GM12878 (cell line): ENCODE measurements at regions of chr12 and their contacts with region 1.

Region 1: DNA sequence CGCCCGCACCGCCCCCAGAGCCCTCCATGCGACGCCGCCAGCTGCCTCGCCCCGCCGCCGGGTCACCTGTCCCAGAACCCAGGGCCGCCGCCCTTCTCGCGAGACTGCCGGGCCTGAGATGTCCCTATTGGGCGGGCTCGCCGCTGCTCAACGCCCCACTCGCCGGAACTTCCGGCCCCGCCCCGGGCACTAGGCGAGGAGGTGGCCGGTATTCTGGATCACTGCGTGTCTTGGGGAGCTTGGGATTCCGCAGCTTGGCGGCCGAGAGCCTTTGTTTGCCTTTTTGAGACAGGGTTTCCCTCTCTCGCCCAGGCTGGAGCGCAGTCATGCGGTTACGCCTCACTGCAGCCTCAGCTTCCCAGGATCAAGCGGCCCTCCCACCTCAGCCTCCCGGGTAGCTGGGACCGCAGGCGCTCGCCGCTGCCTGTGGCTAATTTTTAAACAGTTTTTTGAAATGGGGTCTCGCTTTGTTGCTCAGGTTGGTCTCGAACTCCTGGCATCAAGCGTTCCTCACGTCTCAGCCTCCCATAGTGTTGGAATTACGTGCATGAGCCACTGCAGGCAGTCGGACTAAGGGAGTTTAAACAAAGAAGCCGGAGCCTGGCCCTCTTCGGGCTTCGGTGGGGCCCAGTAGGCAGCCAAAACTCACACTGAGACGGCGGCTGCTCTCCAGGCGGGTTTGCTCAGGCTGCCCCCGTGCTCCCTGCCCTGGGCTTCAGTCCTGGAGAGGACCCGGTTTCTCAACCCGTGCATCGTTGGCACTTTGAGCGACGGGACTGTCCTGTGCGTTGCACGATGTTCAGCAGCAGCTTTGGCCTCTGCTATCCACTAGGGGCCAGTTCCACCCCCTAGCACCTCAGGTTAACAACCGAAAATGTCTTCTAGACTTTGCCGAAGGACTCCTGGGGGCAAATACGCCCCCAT is at the start of gene SLC15A4:
- DNase-seq: no peak
- ATAC-seq: peak; percentile 72
- H3K4me3 ChIP-seq: peak within 1 kb of the TSS; percentile 98
- H3K27ac ChIP-seq: peak within 1 kb of the TSS; percentile 94
- H3K4me1 ChIP-seq: peaks cover 25% of the 10 kb centered on the region
- H3K27me3 ChIP-seq: no peaks in the 10 kb centered on the region
- CTCF ChIP-seq: peak; percentile 27 to 55 (median 36); a peak in 4 of 6 replicates
- EP300 ChIP-seq: no peak; a peak in 1 of 4 replicates
- POLR2A ChIP-seq: peak; percentile 77
- RAD21 ChIP-seq: peak; percentile 29; the same call in 1 of the 2 replicates
- polyA plus RNA-seq, gene SLC15A4: 17.6 to 24.7 TPM

Region 2: GRCh38 chr12:128693771-128694170 is 130.4 kb before region 1 on chr12:
- CTCF ChIA-PET with region 1: no interaction called
- POLR2A ChIA-PET with region 1: no interaction called
- RAD21 ChIA-PET with region 1: no interaction called
- SMC1A ChIA-PET with region 1: no interaction called
- in situ Hi-C with region 1: no loop called
- intact Hi-C with region 1: no loop called
- DNase-seq: no peak
- ATAC-seq: no peak
- H3K4me3 ChIP-seq: no peak overlapping the region
- H3K27ac ChIP-seq: no peak overlapping the region
- H3K4me1 ChIP-seq: no peaks in the 10 kb centered on the region
- H3K27me3 ChIP-seq: no peaks in the 10 kb centered on the region; a peak in 1 of 4 replicates
- CTCF ChIP-seq: no peak
- EP300 ChIP-seq: no peak
- POLR2A ChIP-seq: no peak
- RAD21 ChIP-seq: no peak

Region 3: GRCh38 chr12:128783129-128783574 is 41.0 kb before region 1 on chr12:
- CTCF ChIA-PET with region 1: interaction called, 31 read pairs
- POLR2A ChIA-PET with region 1: interaction called, 10 read pairs
- RAD21 ChIA-PET with region 1: interaction called, 22 read pairs
- SMC1A ChIA-PET with region 1: interaction called, 17 read pairs
- in situ Hi-C with region 1: no loop called
- intact Hi-C with region 1: loop called (anchors 2 kb)
- DNase-seq: no peak
- ATAC-seq: peak; percentile 83
- H3K4me3 ChIP-seq: no peak overlapping the region; the same call in 1 of the 2 replicates
- H3K27ac ChIP-seq: peak overlapping the region; percentile 47; the same call in 1 of the 2 replicates
- H3K4me1 ChIP-seq: no peaks in the 10 kb centered on the region; the same call in none of the 2 replicates
- H3K27me3 ChIP-seq: no peaks in the 10 kb centered on the region
- CTCF ChIP-seq: no peak
- EP300 ChIP-seq: no peak
- POLR2A ChIP-seq: no peak
- RAD21 ChIP-seq: no peak

Region 4: GRCh38 chr12:128797119-128798118 is 26.8 kb before region 1 on chr12:
- CTCF ChIA-PET with region 1: interaction called, 51 read pairs
- POLR2A ChIA-PET with region 1: interaction called, 137 read pairs
- RAD21 ChIA-PET with region 1: interaction called, 125 read pairs
- SMC1A ChIA-PET with region 1: interaction called, 112 read pairs
- in situ Hi-C with region 1: no loop called
- intact Hi-C with region 1: no loop called
- DNase-seq: no peak
- ATAC-seq: peak; percentile 82
- H3K4me3 ChIP-seq: peak overlapping the region; percentile 5; the same call in 1 of the 2 replicates
- H3K27ac ChIP-seq: peak overlapping the region; percentile 99
- H3K4me1 ChIP-seq: peaks cover 60% of the 10 kb centered on the region
- H3K27me3 ChIP-seq: no peaks in the 10 kb centered on the region
- CTCF ChIP-seq: no peak; a peak in 1 of 6 replicates
- EP300 ChIP-seq: peak in 1 of 2 experiments; percentile 26; a peak in 1 of 4 replicates
- POLR2A ChIP-seq: peak; percentile 39
- RAD21 ChIP-seq: peak; percentile 29; the same call in 1 of the 2 replicates

Region 5: DNA sequence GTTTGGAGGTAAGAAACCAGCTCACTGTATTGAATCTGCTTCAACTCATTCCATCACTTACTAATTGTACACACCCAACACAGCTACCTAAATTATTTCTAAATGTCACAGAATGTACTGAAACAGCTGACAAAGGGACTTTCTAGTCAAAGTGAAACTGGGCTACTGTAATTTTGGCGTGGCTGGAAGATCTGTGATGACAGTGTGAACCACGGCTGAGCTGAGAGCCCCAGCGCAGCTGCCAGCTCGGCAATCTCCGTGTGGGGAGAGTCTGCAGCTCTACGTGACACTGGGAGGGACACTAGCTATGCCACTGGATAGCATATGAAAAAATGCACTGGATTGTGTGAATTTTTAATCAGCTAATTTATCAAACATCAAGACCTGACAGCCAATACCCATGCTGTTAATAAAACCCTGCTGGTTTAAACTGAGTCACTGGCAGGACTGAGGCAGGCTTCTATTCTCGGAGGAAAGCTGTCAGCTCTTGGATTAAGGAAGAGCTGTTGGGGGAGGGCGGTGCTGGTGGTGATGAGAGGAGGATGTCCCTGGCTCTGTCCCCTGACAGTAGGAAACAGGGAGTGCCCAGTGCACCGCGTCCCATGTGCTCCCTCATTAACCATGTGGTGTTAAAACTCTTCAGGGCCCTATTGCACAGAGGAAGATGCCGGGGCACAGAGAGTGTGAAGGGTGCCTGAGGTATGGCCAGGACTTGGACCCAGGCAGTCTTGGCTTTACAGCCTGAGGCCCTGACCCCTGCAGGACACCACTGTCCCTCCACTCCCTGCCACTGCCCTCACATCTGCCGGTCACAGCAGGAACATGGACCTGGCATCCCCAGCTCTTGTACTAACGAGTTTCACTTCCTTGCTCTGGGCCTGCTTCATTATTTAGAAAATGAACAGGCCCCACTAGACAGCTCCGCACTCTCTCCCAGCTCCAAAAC is 13.7 kb before region 1 on chr12:
- CTCF ChIA-PET with region 1: interaction called, 38 read pairs
- POLR2A ChIA-PET with region 1: interaction called, 144 read pairs
- RAD21 ChIA-PET with region 1: interaction called, 127 read pairs
- SMC1A ChIA-PET with region 1: interaction called, 101 read pairs
- in situ Hi-C with region 1: no loop called
- intact Hi-C with region 1: no loop called
- DNase-seq: peak; percentile 92
- ATAC-seq: peak; percentile 84
- H3K4me3 ChIP-seq: peak overlapping the region; percentile 55
- H3K27ac ChIP-seq: peak overlapping the region; percentile 94
- H3K4me1 ChIP-seq: peaks cover 61% of the 10 kb centered on the region
- H3K27me3 ChIP-seq: no peaks in the 10 kb centered on the region
- CTCF ChIP-seq: peak; percentile 10 to 31 (median 14); a peak in 1 of 6 replicates
- EP300 ChIP-seq: peak; percentile 64 to 93
- POLR2A ChIP-seq: peak; percentile 79
- RAD21 ChIP-seq: peak; percentile 32; the same call in 1 of the 2 replicates

Region 6: GRCh38 chr12:128857133-128857763 is 33.1 kb after region 1 on chr12:
- CTCF ChIA-PET with region 1: interaction called, 7 read pairs
- POLR2A ChIA-PET with region 1: interaction called, 15 read pairs
- RAD21 ChIA-PET with region 1: interaction called, 16 read pairs
- SMC1A ChIA-PET with region 1: interaction called, 19 read pairs
- in situ Hi-C with region 1: no loop called
- intact Hi-C with region 1: no loop called
- DNase-seq: peak; percentile 31
- ATAC-seq: peak; percentile 17
- H3K4me3 ChIP-seq: no peak overlapping the region
- H3K27ac ChIP-seq: no peak overlapping the region
- H3K4me1 ChIP-seq: peaks cover 11% of the 10 kb centered on the region; the same call in 1 of the 2 replicates
- H3K27me3 ChIP-seq: no peaks in the 10 kb centered on the region
- CTCF ChIP-seq: no peak
- EP300 ChIP-seq: no peak
- POLR2A ChIP-seq: no peak
- RAD21 ChIP-seq: no peak

Region 7: DNA sequence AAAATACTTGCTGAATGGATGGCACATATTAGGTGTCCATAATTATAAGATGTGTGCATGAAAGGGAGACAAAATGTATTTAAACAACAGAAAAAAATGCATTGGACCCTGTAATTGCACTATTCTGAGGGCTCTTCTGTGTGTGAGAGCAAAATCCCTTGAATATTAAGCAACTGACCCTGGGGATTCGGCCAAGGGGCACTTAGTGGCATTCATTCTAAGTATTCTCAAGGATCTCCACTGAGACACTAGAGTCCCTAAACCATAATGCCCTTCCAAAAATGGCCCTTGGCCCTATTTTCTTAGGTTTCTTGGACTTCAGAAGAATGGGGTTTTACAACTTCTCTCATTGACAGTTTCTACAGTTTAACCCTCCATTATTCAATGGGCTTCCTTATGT is 417.7 kb after region 1 on chr12:
- CTCF ChIA-PET with region 1: no interaction called
- POLR2A ChIA-PET with region 1: no interaction called
- RAD21 ChIA-PET with region 1: no interaction called
- SMC1A ChIA-PET with region 1: no interaction called
- in situ Hi-C with region 1: no loop called
- intact Hi-C with region 1: no loop called
- DNase-seq: no peak
- ATAC-seq: no peak
- H3K4me3 ChIP-seq: no peak overlapping the region
- H3K27ac ChIP-seq: no peak overlapping the region
- H3K4me1 ChIP-seq: no peaks in the 10 kb centered on the region
- H3K27me3 ChIP-seq: no peaks in the 10 kb centered on the region
- CTCF ChIP-seq: no peak
- EP300 ChIP-seq: no peak
- POLR2A ChIP-seq: no peak
- RAD21 ChIP-seq: no peak